Right cardiac atrium (tissue), 5 donors: ENCODE measurements at regions of chr13 and their contacts with region 1.

Region 1: DNA sequence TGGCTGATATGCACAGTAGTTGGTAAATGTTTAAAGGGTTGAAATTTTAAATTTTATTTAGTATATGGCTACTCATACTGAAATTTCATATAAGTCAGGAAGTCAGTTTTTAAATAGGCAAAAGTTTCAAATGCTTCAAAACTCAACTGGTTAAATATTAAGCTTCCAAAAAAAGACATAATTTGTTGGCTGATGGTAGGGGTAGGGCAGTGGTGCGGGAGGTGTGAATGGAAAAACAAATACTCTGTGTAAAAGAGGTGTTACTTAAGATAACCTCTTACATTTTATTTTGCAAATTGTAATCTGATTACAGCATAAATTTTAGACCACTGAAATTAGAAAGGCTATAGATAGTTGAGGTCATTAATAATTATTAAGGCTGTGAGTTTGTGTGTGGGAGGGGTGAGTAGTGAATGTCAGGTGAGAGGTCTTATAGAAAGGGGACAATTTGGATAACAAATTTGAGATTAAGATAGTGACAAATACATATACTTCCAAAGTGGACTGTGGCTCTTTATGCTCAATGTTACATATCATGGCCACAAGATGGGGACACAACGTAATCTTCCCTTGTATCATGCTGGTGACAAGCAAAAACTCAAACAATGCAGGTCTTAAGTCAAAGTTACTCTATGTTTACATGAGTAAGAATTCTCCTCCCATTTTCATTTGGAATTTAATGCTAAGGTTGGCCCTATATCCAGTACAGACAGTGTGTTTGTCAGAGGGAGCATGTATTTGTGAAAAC is 36.6 kb upstream of the OXGR1 start:
- DNase-seq: no peak
- ATAC-seq: no peak
- H3K4me3 ChIP-seq: no peak overlapping the region
- H3K27ac ChIP-seq: no peak overlapping the region
- H3K4me1 ChIP-seq: no peaks in the 10 kb centered on the region
- H3K27me3 ChIP-seq: no peaks in the 10 kb centered on the region

Region 2: GRCh38 chr13:97212601-97213040 is 181.7 kb after region 1 on chr13:
- intact Hi-C with region 1: loop called in 1 of 4 experiments (anchors 10 kb)
- DNase-seq: no peak
- ATAC-seq: peak; percentile 62 to 67
- H3K4me3 ChIP-seq: no peak overlapping the region
- H3K27ac ChIP-seq: no peak overlapping the region
- H3K4me1 ChIP-seq: no peaks in the 10 kb centered on the region
- H3K27me3 ChIP-seq: no peaks in the 10 kb centered on the region

Region 3: DNA sequence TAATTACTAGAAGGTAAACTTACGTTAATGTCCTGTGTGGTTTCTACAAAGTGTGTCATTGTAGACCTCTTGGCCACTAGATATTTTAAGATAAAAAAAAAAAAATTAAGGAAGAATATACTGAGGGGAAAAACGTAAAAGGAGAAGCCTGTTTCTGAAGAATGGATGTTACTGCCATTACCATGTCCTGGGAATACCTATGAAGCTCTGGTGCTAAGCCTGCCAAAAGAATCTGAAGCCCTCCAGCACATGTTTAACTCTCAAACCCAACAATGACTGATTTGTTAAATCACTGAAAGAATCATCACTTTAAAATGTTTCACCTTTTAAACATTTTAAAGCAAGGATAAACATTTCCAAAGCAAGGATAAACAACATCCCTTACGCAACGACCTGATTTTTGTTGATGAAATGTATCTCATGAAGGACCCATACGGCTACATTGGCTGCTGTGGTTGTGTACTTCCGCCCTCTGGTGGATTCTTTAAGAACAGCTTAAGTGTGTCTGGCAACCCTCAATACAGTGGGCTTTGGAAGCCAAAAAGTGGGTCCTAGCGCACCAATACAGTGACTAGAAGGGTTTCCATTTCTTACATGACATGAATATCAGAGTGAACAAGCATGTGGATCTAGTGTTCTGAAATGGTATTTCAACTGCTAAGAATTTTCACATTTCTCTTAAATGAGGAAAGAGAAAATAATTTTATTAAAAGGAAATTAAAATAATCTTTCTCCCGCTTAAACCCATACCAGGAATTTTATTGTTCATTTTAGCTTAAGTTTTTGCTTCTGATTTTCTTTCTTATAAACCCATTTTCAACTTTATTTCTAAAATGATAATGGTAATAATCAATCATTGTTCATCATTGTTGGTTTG is 328.5 kb after region 1 on chr13:
- intact Hi-C with region 1: loop called in 1 of 4 experiments (anchors 10 kb)
- DNase-seq: no peak
- ATAC-seq: peak; percentile 87 to 89
- H3K4me3 ChIP-seq: no peak overlapping the region
- H3K27ac ChIP-seq: no peak overlapping the region
- H3K4me1 ChIP-seq: peaks cover 9% of the 10 kb centered on the region
- H3K27me3 ChIP-seq: no peaks in the 10 kb centered on the region